MCF 10A (cell line): ENCODE measurements at regions of chr3 and their contacts with region 1.

Region 1: GRCh38 chr3:60268123-60268522 is 983.1 kb downstream of the FHIT start:
- DNase-seq: no peak
- H3K4me3 Mint-ChIP-seq: no peak overlapping the region
- H3K27ac Mint-ChIP-seq: no peak overlapping the region
- H3K4me1 Mint-ChIP-seq: no peaks in the 10 kb centered on the region
- H3K27me3 Mint-ChIP-seq: no peaks in the 10 kb centered on the region
- CTCF ChIP-seq: no peak

Region 2: DNA sequence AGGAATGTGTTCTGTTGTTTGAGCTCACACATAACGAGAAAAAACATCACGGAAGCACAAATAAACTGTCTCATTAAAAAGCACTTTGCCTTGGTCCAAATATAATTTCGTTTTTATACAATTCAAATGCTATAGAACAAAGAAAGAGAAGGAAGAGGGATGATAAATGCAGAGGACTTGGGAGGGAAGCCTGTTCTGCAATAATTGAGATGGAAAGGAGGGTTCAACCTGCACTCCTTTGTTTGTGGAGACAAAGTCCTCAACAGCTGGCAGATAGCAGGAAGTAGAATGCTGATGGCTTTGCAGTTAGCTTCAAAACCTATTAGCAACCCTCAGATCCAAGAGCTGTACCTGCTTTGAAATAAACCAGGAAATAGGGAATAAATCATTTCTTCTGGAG is 27.6 kb before region 1 on chr3:
- CTCF ChIA-PET with region 1: no interaction called
- POLR2A ChIA-PET with region 1: no interaction called
- intact Hi-C with region 1: loop called (anchors 1 kb)
- DNase-seq: no peak
- H3K4me3 Mint-ChIP-seq: no peak overlapping the region
- H3K27ac Mint-ChIP-seq: no peak overlapping the region
- H3K4me1 Mint-ChIP-seq: no peaks in the 10 kb centered on the region
- H3K27me3 Mint-ChIP-seq: no peaks in the 10 kb centered on the region
- CTCF ChIP-seq: no peak